Activated naive CD4-positive, alpha-beta T cell treated with anti-CD3 and anti-CD28 coated beads, Interleukin-2, amount 10 ng/mL, durations not matched to agents 7 days and 5 days (primary cell): ENCODE measurements at regions of chr16 and their contacts with region 1.

Region 1: DNA sequence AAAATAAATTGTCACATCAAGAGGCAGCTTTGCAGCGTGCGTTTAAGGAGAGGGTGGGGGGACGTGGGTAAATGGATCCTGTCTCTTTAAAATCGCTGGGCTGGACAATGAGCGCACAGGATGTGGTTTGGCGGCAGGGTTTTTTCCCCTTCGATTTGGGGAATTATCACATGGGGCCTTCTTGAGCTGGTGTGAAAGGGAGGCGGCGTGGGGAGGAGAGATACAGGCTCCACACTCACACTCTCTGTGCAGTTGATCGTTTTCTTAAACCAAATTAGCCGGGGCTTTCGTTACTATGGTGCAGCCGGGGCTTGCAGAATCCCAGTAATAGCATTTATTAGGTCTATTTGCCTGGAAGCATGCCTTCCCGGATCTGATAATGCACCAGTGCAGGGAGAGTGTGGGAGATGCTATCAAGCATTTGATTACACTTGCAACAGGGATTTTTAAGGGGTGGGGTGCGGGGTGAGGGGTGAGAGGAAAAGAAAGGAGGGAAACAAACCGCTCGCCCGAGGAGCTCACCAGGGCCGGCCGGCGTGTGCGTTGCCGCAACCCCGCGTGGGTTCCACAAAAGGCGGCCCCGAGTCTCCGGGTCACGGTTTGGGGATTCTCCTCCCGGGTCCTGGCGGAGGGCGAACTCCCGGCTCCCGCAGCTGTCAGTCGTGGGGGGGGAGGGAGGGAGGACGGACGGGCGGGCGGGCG is 58.9 kb upstream of the GSE1 start:
- DNase-seq: peak; percentile 88
- H3K4me3 Mint-ChIP-seq: peak overlapping the region; percentile 81
- H3K27ac Mint-ChIP-seq: peak overlapping the region; percentile 93
- H3K4me1 Mint-ChIP-seq: peaks cover 39% of the 10 kb centered on the region
- H3K27me3 Mint-ChIP-seq: peaks cover 43% of the 10 kb centered on the region

Region 2: DNA sequence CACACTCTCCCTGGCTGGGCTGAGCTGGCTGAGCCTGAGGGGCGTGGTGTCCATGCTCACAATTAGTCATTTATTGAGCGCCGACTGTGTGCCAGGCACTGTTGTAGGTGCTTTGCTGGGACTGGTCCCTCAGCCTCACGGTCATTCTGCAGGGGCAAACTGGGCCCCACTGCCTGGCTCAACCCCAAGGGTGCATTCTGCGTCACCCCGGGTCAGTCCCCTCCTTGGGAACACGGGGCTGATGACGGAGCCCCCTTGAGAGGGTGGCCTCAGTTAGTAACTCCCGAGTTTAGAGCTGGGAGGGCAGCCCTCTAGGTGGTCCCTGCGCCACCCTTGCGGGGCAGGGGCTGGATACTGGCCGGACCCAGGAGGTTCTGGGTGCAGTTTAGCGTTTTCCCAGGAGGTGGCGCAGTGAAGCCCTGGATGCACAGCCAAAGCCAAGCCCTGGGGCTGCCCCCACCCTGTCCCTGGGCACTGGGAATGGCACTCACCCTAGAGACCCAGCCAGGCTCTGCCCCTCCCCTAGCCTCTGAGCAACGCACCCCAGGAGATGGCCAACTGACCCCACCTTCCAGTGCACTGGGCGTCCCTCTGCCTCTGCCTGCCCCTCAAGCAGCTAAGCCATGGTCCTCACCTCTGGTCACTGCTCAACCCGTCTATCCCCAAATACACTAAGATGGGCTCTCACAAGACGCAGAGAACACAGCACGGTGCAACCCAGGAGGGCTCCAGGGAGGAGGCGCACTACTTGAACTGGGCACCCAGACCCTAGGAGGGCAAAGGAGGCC is 184.3 kb before region 1 on chr16:
- CTCF ChIA-PET with region 1: no interaction called
- DNase-seq: peak; percentile 67
- H3K4me3 Mint-ChIP-seq: no peak overlapping the region
- H3K27ac Mint-ChIP-seq: no peak overlapping the region
- H3K4me1 Mint-ChIP-seq: peaks cover 3% of the 10 kb centered on the region
- H3K27me3 Mint-ChIP-seq: peaks cover 6% of the 10 kb centered on the region

Region 3: DNA sequence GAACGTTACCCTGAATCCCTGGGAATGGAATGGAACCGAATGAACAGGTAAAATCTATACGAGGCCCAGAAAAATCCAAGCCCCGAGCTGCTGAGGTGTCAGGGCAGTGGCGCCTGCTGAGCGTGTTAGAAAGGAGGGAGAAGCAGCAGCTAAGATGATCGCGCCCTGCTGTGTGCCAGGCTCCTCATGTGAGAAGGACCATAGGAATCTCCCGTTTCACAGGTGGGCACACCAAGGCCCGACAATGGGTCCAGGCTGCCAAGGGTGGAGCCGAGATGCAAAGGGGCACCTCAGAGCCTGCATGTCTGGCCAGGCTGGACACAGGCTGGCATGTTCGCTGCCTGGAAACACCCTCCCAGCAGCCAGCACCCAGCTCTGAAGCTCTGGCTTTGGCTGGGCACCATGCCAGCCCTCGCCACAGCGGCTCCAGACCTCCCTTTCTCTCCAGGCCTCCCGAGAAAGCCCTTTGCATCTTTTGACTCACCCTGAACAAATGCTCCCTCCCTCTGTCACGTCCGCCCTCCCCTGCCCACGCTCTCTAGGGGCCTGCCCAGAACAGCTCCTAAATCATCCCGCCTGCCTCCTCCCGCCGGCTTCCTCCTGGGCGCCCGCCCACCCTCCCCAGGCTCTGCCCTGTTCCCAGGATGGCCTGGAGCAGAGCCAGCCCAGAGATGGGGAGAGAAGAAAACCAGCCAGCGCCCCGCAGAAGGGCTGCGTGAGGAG is 158.9 kb before region 1 on chr16:
- CTCF ChIA-PET with region 1: no interaction called
- DNase-seq: peak; percentile 19
- H3K4me3 Mint-ChIP-seq: no peak overlapping the region
- H3K27ac Mint-ChIP-seq: no peak overlapping the region
- H3K4me1 Mint-ChIP-seq: no peaks in the 10 kb centered on the region
- H3K27me3 Mint-ChIP-seq: peaks cover 13% of the 10 kb centered on the region

Region 4: GRCh38 chr16:85420501-85421337 is 133.5 kb before region 1 on chr16:
- CTCF ChIA-PET with region 1: interaction called, 14 read pairs
- DNase-seq: peak; percentile 76
- H3K4me3 Mint-ChIP-seq: no peak overlapping the region
- H3K27ac Mint-ChIP-seq: no peak overlapping the region
- H3K4me1 Mint-ChIP-seq: peaks cover 5% of the 10 kb centered on the region
- H3K27me3 Mint-ChIP-seq: peaks cover 26% of the 10 kb centered on the region

Region 5: GRCh38 chr16:85448557-85449197 is 105.6 kb before region 1 on chr16:
- CTCF ChIA-PET with region 1: no interaction called
- DNase-seq: peak; percentile 58
- H3K4me3 Mint-ChIP-seq: no peak overlapping the region
- H3K27ac Mint-ChIP-seq: peak overlapping the region; percentile 58
- H3K4me1 Mint-ChIP-seq: peaks cover 24% of the 10 kb centered on the region
- H3K27me3 Mint-ChIP-seq: peaks cover 61% of the 10 kb centered on the region

Region 6: GRCh38 chr16:85567101-85567866 is 13.0 kb after region 1 on chr16:
- CTCF ChIA-PET with region 1: interaction called, 13 read pairs
- DNase-seq: no peak
- H3K4me3 Mint-ChIP-seq: no peak overlapping the region
- H3K27ac Mint-ChIP-seq: no peak overlapping the region
- H3K4me1 Mint-ChIP-seq: peaks cover 49% of the 10 kb centered on the region
- H3K27me3 Mint-ChIP-seq: peaks cover 13% of the 10 kb centered on the region